Activated CD8-positive, alpha-beta memory T cell treated with anti-CD3 and anti-CD28 coated beads, Interleukin-2, amount 10 ng/mL, durations not matched to agents 7 days and 5 days (primary cell): ENCODE measurements at regions of chr3 and their contacts with region 1.

Region 1: DNA sequence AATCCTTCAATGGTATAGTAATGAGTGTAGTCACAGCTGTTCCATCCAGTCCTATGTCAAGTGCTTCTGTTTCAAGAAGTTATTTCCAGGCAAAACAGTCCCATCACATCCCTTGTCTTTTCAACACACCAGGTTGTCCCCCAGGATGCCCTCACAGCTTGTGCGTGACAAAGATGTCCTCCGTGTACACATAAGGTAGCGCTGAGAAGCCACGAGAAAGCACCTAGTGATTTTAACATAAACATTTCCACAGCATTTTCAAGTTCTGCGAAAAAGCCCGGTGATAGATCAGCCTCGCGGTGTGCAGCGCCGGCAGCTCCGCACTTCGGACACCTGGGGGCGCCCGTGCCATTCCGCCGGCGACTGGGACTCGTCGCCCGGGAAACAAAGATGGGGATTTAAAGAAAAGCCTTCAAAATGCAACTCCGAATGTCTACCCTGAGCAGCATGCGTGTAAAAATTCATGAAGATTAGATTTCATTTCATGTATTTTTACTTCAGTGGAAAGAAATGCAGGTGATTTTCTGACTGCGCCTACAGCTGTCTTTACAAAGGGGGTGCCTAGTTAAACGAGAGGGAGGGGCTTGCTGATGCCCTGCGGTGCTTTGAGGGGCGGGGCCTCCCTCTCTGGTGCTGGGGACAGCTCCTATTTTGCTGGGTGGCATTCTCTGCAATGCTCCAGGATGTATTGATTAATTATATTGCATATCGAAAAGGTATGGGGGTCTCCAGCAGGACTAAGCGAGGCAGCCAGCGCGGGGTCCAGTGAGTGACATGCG is 49.9 kb downstream of the KY start:
- DNase-seq: peak; percentile 70
- ATAC-seq: peak; percentile 85
- H3K4me3 Mint-ChIP-seq: no peak overlapping the region
- H3K27ac Mint-ChIP-seq: no peak overlapping the region
- H3K4me1 Mint-ChIP-seq: peaks cover 17% of the 10 kb centered on the region
- H3K27me3 Mint-ChIP-seq: peaks cover 14% of the 10 kb centered on the region

Region 2: GRCh38 chr3:134336587-134336986 is 264.3 kb before region 1 on chr3:
- CTCF ChIA-PET with region 1: no interaction called
- DNase-seq: no peak
- ATAC-seq: no peak
- H3K4me3 Mint-ChIP-seq: no peak overlapping the region
- H3K27ac Mint-ChIP-seq: no peak overlapping the region
- H3K4me1 Mint-ChIP-seq: no peaks in the 10 kb centered on the region
- H3K27me3 Mint-ChIP-seq: no peaks in the 10 kb centered on the region

Region 3: GRCh38 chr3:134505485-134505884 is 95.4 kb before region 1 on chr3:
- CTCF ChIA-PET with region 1: no interaction called
- DNase-seq: no peak
- ATAC-seq: no peak
- H3K4me3 Mint-ChIP-seq: no peak overlapping the region
- H3K27ac Mint-ChIP-seq: no peak overlapping the region
- H3K4me1 Mint-ChIP-seq: no peaks in the 10 kb centered on the region
- H3K27me3 Mint-ChIP-seq: no peaks in the 10 kb centered on the region

Region 4: DNA sequence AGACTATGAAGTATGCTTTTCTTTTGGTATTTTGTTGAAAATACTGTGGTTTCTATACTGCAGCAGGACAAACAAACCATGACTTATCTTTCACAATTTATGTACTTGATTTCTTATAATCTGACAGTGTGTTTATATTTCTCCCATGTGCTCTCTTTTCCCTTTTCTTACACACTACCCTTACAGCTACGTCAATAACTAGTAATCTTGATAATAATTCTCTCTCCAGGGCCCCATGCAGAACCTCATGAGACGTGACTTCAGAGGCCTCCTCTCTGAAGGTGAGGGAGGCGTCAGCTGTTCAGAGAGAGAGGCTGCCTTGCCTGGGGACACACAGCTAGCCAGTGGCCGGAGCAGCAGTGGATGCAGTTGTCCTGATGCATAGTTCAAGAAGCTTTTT is 14.1 kb after region 1 on chr3:
- CTCF ChIA-PET with region 1: interaction called, 15 read pairs
- DNase-seq: no peak
- ATAC-seq: no peak
- H3K4me3 Mint-ChIP-seq: no peak overlapping the region
- H3K27ac Mint-ChIP-seq: no peak overlapping the region
- H3K4me1 Mint-ChIP-seq: no peaks in the 10 kb centered on the region
- H3K27me3 Mint-ChIP-seq: no peaks in the 10 kb centered on the region

Region 5: GRCh38 chr3:134754768-134755559 is 154.1 kb after region 1 on chr3:
- CTCF ChIA-PET with region 1: interaction called, 25 read pairs
- DNase-seq: peak; percentile 61
- ATAC-seq: peak; percentile 61
- H3K4me3 Mint-ChIP-seq: no peak overlapping the region
- H3K27ac Mint-ChIP-seq: no peak overlapping the region
- H3K4me1 Mint-ChIP-seq: no peaks in the 10 kb centered on the region
- H3K27me3 Mint-ChIP-seq: peaks cover 3% of the 10 kb centered on the region

Region 6: DNA sequence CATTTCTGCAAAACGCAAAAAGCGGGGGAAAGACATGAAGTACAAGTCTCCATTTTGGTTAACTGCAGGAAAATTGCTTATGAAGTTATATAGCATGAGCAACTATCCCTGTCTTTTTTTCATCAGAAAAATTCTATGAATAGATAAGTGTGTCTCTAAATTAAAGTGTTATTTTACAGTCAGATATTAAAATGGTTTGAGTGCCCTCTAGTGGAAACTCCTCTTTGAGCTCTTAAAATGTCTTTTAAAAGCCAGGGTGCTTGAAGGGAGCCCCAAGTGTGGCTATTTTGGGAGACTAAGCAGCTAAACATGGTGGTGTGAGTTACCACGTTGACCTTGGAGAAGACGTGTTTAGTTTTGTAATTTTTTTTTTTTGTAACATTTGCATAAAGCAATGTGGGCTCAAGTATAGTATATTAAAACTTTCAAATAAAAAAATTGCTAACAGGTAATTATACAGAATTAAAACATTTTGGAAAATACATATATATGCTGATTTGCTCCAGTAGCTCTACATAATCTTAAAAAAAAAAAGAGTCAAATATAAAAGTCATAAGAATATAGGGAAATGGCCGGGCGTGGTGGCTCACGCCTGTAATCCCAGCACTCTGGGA is 1441.8 kb after region 1 on chr3:
- CTCF ChIA-PET with region 1: interaction called, 13 read pairs
- DNase-seq: no peak
- ATAC-seq: no peak
- H3K4me3 Mint-ChIP-seq: no peak overlapping the region
- H3K27ac Mint-ChIP-seq: no peak overlapping the region
- H3K4me1 Mint-ChIP-seq: no peaks in the 10 kb centered on the region
- H3K27me3 Mint-ChIP-seq: peaks cover 19% of the 10 kb centered on the region